CD8-positive, alpha-beta T cell (primary cell): ENCODE measurements at regions of chr18 and their contacts with region 1.

Region 1: DNA sequence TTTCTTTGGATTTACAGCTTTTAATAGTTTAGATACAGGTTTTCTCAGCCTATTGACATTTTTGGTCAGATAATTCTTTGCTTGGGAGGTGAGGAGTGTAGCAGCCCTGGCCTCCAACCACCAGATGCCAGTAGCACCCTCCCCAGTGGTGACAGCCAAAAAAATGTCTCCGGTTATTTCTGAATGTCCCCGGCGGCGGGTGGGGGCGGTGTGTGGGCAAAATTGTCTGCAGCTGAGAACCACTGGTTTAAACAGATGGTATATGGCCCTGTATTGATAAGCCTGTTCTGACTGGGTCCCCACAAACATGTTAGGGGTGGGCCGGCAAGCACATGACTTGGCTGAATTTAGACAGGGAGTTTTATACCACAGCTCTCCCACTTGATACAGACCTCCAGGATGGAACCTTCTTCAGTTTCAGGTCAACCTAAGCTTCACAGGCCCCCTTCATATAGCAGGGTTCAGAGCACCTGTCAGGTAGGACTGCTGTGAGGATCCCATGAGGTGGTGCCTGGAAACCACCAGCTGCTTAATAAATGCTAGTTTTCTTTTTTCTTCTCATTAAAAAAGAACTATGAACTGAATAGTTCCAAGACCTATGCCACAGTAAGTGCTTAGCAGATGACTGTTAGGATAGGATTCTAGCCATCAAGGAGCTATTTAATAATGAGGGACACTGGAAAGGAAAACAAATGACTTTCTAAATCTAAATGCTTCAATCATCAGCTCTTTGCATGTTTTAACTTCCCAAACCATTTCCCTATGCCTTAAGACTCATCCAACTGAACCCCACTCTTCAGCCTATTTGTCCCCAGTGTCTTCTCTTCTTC is 18.1 kb downstream of the LPIN2 start:
- DNase-seq: peak; percentile 50 to 87 (median 76)
- ATAC-seq: peak; percentile 92
- H3K4me3 ChIP-seq: peak overlapping the region in 1 of 2 experiments; percentile 22
- H3K4me3 Mint-ChIP-seq: peak overlapping the region; percentile 56
- H3K27ac ChIP-seq: no peak overlapping the region
- H3K27ac Mint-ChIP-seq: peak overlapping the region; percentile 78
- H3K4me1 ChIP-seq: peaks cover 46% of the 10 kb centered on the region
- H3K4me1 Mint-ChIP-seq: peaks cover 69% of the 10 kb centered on the region
- H3K27me3 ChIP-seq: no peaks in the 10 kb centered on the region
- H3K27me3 Mint-ChIP-seq: no peaks in the 10 kb centered on the region
- CTCF ChIP-seq: peak; percentile 72

Region 2: GRCh38 chr18:2150566-2150965 is 844.3 kb before region 1 on chr18:
- CTCF ChIA-PET with region 1: no interaction called
- POLR2A ChIA-PET with region 1: no interaction called
- intact Hi-C with region 1: no loop called
- DNase-seq: no peak
- ATAC-seq: no peak
- H3K4me3 ChIP-seq: no peak overlapping the region
- H3K4me3 Mint-ChIP-seq: no peak overlapping the region
- H3K27ac ChIP-seq: no peak overlapping the region
- H3K27ac Mint-ChIP-seq: no peak overlapping the region
- H3K4me1 ChIP-seq: no peaks in the 10 kb centered on the region
- H3K4me1 Mint-ChIP-seq: no peaks in the 10 kb centered on the region
- H3K27me3 ChIP-seq: no peaks in the 10 kb centered on the region
- H3K27me3 Mint-ChIP-seq: peaks cover 10% of the 10 kb centered on the region
- CTCF ChIP-seq: no peak

Region 3: DNA sequence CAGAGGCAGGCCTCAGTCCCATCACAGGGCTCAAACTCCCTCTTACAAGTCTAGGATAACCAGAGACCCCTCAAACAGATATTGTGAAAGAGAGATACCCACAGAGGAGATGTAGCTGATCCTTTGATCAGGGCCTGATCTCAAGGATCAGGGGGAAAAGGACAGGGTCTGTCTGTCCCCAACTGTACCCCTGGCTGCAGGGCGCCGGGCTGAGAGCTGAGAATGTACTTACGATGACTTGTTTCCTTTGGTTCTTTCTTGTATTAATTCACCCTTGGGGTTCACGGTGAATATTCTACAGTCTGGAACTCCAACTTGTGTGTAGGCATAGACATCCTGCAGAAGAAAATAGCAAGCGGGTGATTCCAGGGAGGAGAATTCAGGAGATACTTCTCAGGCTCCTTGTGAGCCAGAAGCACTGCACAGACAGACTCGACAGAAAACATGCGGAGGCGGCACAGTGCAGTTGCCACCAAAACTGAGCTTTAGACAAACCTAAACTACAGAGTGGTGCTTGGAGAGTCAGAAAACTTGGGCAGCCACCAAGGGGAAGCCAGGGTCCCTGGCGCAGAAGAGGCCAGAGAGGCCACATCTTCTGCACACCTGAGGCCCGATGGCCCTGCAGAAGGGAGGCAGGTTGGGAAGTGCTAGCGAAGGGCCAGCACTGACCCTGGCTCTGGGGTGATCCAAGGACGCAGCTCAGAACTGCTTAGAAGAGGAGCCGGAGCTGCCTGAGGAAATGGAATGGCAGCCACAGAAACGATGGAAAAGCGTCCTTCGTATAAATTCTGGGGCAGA is 74.1 kb before region 1 on chr18:
- CTCF ChIA-PET with region 1: interaction called, 13 read pairs
- POLR2A ChIA-PET with region 1: no interaction called
- intact Hi-C with region 1: no loop called
- DNase-seq: no peak
- ATAC-seq: no peak
- H3K4me3 ChIP-seq: no peak overlapping the region
- H3K4me3 Mint-ChIP-seq: no peak overlapping the region
- H3K27ac ChIP-seq: no peak overlapping the region
- H3K27ac Mint-ChIP-seq: peak overlapping the region; percentile 18
- H3K4me1 ChIP-seq: peaks cover 12% of the 10 kb centered on the region
- H3K4me1 Mint-ChIP-seq: peaks cover 24% of the 10 kb centered on the region
- H3K27me3 ChIP-seq: no peaks in the 10 kb centered on the region
- H3K27me3 Mint-ChIP-seq: no peaks in the 10 kb centered on the region
- CTCF ChIP-seq: no peak

Region 4: DNA sequence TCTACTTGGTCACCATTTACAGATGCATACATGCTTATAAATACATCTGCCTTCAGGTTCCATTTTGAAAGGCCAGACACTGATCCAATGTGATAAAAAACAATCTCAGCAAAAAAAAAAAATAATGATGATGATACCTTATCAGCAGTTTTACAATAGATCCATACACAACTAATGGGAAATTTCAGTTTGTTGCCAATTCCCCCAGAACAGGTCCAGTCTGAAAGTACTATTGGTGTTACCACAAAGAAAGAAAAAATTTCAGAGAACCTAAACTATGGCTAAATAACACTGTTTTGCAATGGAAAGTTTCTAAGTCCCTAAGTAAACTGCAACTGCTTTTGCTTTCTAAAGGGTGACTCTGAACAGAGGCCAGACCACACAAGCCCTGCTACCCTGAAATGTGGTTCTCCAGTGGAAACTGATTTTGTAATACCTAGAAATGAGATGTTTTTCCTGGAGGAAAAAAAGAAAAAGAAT is 36.0 kb before region 1 on chr18:
- CTCF ChIA-PET with region 1: interaction called, 17 read pairs
- POLR2A ChIA-PET with region 1: interaction called, 8 read pairs
- intact Hi-C with region 1: no loop called
- DNase-seq: peak in 2 of 9 experiments; percentile 49 to 70
- ATAC-seq: no peak
- H3K4me3 ChIP-seq: no peak overlapping the region
- H3K4me3 Mint-ChIP-seq: peak overlapping the region; percentile 50
- H3K27ac ChIP-seq: peak overlapping the region; percentile 65 to 90
- H3K27ac Mint-ChIP-seq: peak overlapping the region; percentile 97
- H3K4me1 ChIP-seq: peaks cover 92% of the 10 kb centered on the region
- H3K4me1 Mint-ChIP-seq: peaks cover 89% of the 10 kb centered on the region
- H3K27me3 ChIP-seq: no peaks in the 10 kb centered on the region
- H3K27me3 Mint-ChIP-seq: no peaks in the 10 kb centered on the region
- CTCF ChIP-seq: no peak

Region 5: GRCh38 chr18:2978646-2979045 is 16.2 kb before region 1 on chr18:
- CTCF ChIA-PET with region 1: interaction called, 11 read pairs
- POLR2A ChIA-PET with region 1: no interaction called
- intact Hi-C with region 1: no loop called
- DNase-seq: peak in 3 of 9 experiments; percentile 47 to 68 (median 55)
- ATAC-seq: peak; percentile 21
- H3K4me3 ChIP-seq: peak overlapping the region; percentile 19 to 22
- H3K4me3 Mint-ChIP-seq: peak overlapping the region; percentile 81
- H3K27ac ChIP-seq: peak overlapping the region; percentile 25 to 87
- H3K27ac Mint-ChIP-seq: peak overlapping the region; percentile 92
- H3K4me1 ChIP-seq: peaks cover 61% of the 10 kb centered on the region
- H3K4me1 Mint-ChIP-seq: peaks cover 77% of the 10 kb centered on the region
- H3K27me3 ChIP-seq: no peaks in the 10 kb centered on the region
- H3K27me3 Mint-ChIP-seq: no peaks in the 10 kb centered on the region
- CTCF ChIP-seq: no peak

Region 6: GRCh38 chr18:3062798-3063680 is 68.2 kb after region 1 on chr18:
- CTCF ChIA-PET with region 1: interaction called, 150 read pairs
- POLR2A ChIA-PET with region 1: interaction called, 19 read pairs
- intact Hi-C with region 1: loop called (anchors 1 kb)
- DNase-seq: peak; percentile 42 to 79 (median 72)
- ATAC-seq: peak; percentile 27
- H3K4me3 ChIP-seq: no peak overlapping the region
- H3K4me3 Mint-ChIP-seq: peak overlapping the region; percentile 58
- H3K27ac ChIP-seq: peak overlapping the region; percentile 88 to 95
- H3K27ac Mint-ChIP-seq: peak overlapping the region; percentile 93
- H3K4me1 ChIP-seq: peaks cover 58% of the 10 kb centered on the region
- H3K4me1 Mint-ChIP-seq: peaks cover 67% of the 10 kb centered on the region
- H3K27me3 ChIP-seq: no peaks in the 10 kb centered on the region
- H3K27me3 Mint-ChIP-seq: no peaks in the 10 kb centered on the region
- CTCF ChIP-seq: peak; percentile 85

Region 7: GRCh38 chr18:3093624-3094337 is 99.0 kb after region 1 on chr18:
- CTCF ChIA-PET with region 1: interaction called, 14 read pairs
- POLR2A ChIA-PET with region 1: no interaction called
- intact Hi-C with region 1: no loop called
- DNase-seq: no peak
- ATAC-seq: no peak
- H3K4me3 ChIP-seq: no peak overlapping the region
- H3K4me3 Mint-ChIP-seq: no peak overlapping the region
- H3K27ac ChIP-seq: no peak overlapping the region
- H3K27ac Mint-ChIP-seq: no peak overlapping the region
- H3K4me1 ChIP-seq: peaks cover 21% of the 10 kb centered on the region
- H3K4me1 Mint-ChIP-seq: peaks cover 25% of the 10 kb centered on the region
- H3K27me3 ChIP-seq: no peaks in the 10 kb centered on the region
- H3K27me3 Mint-ChIP-seq: no peaks in the 10 kb centered on the region
- CTCF ChIP-seq: no peak

Region 8: GRCh38 chr18:3151399-3152264 is 156.8 kb after region 1 on chr18:
- CTCF ChIA-PET with region 1: interaction called, 29 read pairs
- POLR2A ChIA-PET with region 1: interaction called, 3 read pairs
- intact Hi-C with region 1: loop called (anchors 1 kb)
- DNase-seq: peak in 2 of 9 experiments; percentile 46 to 55
- ATAC-seq: no peak
- H3K4me3 ChIP-seq: no peak overlapping the region
- H3K4me3 Mint-ChIP-seq: no peak overlapping the region
- H3K27ac ChIP-seq: no peak overlapping the region
- H3K27ac Mint-ChIP-seq: no peak overlapping the region
- H3K4me1 ChIP-seq: no peaks in the 10 kb centered on the region
- H3K4me1 Mint-ChIP-seq: peaks cover 4% of the 10 kb centered on the region
- H3K27me3 ChIP-seq: no peaks in the 10 kb centered on the region
- H3K27me3 Mint-ChIP-seq: no peaks in the 10 kb centered on the region
- CTCF ChIP-seq: peak; percentile 93

Region 9: DNA sequence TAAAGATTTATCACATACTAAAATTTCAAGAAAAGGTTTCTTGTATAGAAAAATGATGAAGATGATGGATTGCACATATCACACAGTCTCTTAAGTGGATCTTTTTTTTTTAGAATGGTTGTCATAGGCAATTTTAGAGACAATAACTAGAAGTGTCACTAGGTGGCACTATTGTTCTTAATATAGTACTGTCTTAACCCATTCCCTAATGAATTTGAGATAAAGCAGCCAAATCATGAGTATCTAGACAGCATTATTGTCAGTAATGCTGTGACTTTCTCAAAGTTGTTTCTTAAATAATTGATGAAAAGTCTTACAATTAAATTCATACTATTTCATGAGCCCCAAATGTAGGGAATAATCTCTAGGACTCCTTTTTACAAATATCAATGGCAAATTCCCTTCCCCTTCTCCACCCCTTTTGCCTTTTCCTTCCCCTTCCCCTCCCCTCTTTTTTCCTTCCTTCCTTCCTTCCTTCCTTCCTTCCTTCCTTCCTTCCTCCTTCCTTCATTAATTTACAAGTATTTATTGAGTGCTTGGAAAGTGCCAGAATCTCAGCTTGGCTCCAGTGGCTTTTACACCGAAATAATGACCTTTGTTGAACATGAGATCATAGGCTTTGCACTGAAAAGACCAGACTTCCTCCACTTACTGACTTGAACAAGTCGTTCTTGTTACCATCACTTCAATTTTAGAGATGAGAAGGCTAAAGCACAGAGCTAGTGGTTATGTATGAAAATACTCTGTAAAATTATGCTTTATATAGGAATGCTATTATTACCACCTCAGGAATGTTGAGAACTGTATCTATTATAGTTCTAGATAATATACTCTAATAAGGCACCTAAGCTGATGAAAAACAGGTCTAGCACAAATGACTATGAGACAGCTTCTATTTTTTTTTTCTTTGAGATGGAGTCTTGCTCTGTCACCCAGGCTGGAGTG is 286.9 kb after region 1 on chr18:
- CTCF ChIA-PET with region 1: no interaction called
- POLR2A ChIA-PET with region 1: no interaction called
- intact Hi-C with region 1: no loop called
- DNase-seq: peak in 2 of 9 experiments; percentile 77 to 84
- ATAC-seq: peak; percentile 93
- H3K4me3 ChIP-seq: no peak overlapping the region
- H3K4me3 Mint-ChIP-seq: no peak overlapping the region
- H3K27ac ChIP-seq: no peak overlapping the region
- H3K27ac Mint-ChIP-seq: no peak overlapping the region
- H3K4me1 ChIP-seq: no peaks in the 10 kb centered on the region
- H3K4me1 Mint-ChIP-seq: peaks cover 4% of the 10 kb centered on the region
- H3K27me3 ChIP-seq: no peaks in the 10 kb centered on the region
- H3K27me3 Mint-ChIP-seq: no peaks in the 10 kb centered on the region
- CTCF ChIP-seq: peak; percentile 75

Region 10: GRCh38 chr18:3771121-3771971 is 776.5 kb after region 1 on chr18:
- CTCF ChIA-PET with region 1: no interaction called
- POLR2A ChIA-PET with region 1: no interaction called
- intact Hi-C with region 1: no loop called
- DNase-seq: peak; percentile 40 to 81 (median 68)
- ATAC-seq: peak; percentile 99
- H3K4me3 ChIP-seq: peak overlapping the region; percentile 14 to 27
- H3K4me3 Mint-ChIP-seq: peak overlapping the region; percentile 58
- H3K27ac ChIP-seq: no peak overlapping the region
- H3K27ac Mint-ChIP-seq: no peak overlapping the region
- H3K4me1 ChIP-seq: peaks cover 5% of the 10 kb centered on the region
- H3K4me1 Mint-ChIP-seq: peaks cover 12% of the 10 kb centered on the region
- H3K27me3 ChIP-seq: peaks cover 0 to 3% of the 10 kb centered on the region in 2 experiments
- H3K27me3 Mint-ChIP-seq: peaks cover 20% of the 10 kb centered on the region
- CTCF ChIP-seq: peak; percentile 70